ENCODE measurements at regions of chr1 and their contacts with region 1.

Region 1: DNA sequence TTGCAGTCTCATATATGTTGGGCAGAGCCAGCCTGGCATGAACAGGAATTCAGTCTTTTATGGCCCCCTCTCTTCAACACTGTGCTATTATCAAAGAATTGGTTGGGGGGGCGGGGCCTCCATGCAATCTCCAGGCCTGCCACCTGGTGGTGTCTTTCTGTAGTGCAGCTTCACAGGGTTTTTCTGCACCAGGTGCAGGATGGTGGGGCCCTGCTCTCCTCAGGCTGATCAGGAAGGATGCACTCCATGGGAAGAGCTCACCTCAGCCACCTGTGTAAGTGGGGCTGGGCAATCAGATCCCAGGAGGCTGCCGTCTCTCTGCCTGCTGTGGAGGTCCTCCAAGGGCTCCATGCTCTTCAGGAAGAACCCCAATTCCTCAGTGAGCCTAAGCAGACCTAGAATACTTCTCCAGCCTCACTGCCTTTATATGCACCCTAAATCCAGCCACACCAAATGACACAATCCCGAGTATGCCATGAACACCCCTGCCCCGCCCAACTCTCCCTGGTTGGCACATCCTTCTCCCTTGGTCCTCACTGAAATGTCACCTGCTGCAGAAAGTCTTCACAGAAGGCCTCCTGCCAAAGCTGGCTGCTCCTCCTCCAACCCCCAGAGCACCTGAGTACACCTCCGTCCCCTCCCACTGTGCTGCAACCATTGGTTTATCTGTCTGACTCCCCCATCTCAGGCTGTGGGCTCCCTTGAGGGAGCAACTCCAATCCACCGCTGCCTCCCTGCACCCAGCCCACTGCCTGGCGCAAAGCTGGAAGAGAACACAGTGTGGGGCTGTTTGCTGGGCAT is 16.5 kb downstream of the STK40 start:
- DNase-seq: peak; percentile 75 to 91 (median 85)
- ATAC-seq: peak; percentile 62
- H3K4me3 ChIP-seq: no peak overlapping the region
- H3K4me3 Mint-ChIP-seq: no peak overlapping the region
- H3K27ac ChIP-seq: peak overlapping the region in 1 of 2 experiments; percentile 25
- H3K27ac Mint-ChIP-seq: peak overlapping the region; percentile 79
- H3K4me1 ChIP-seq: peaks cover 55% of the 10 kb centered on the region
- H3K4me1 Mint-ChIP-seq: peaks cover 68% of the 10 kb centered on the region
- H3K27me3 ChIP-seq: no peaks in the 10 kb centered on the region
- H3K27me3 Mint-ChIP-seq: no peaks in the 10 kb centered on the region
- CTCF ChIP-seq: peak; percentile 88

Region 2: DNA sequence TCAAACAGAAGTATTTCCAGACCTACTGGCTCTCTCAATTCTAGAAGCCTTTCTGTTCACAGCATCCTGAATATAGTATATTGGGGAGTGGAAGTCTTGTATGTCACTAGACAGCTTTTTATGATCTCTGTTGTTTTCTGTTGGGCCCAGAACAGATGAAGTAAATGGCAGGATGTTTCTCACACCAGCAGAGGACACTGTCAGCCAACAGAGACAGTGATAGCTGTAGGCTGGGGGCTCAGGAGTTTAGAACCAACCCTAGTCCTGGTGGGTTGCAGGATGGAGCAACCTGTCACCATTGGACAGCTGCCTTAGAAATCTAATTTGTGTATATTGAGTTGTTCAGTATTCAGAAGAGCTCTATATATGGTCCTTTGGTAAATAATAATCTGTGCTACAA is 469.3 kb before region 1 on chr1:
- CTCF ChIA-PET with region 1: no interaction called
- POLR2A ChIA-PET with region 1: no interaction called
- intact Hi-C with region 1: no loop called
- DNase-seq: no peak
- ATAC-seq: no peak
- H3K4me3 ChIP-seq: no peak overlapping the region
- H3K4me3 Mint-ChIP-seq: no peak overlapping the region
- H3K27ac ChIP-seq: no peak overlapping the region
- H3K27ac Mint-ChIP-seq: no peak overlapping the region
- H3K4me1 ChIP-seq: no peaks in the 10 kb centered on the region
- H3K4me1 Mint-ChIP-seq: no peaks in the 10 kb centered on the region
- H3K27me3 ChIP-seq: no peaks in the 10 kb centered on the region
- H3K27me3 Mint-ChIP-seq: no peaks in the 10 kb centered on the region
- CTCF ChIP-seq: no peak

Region 3: DNA sequence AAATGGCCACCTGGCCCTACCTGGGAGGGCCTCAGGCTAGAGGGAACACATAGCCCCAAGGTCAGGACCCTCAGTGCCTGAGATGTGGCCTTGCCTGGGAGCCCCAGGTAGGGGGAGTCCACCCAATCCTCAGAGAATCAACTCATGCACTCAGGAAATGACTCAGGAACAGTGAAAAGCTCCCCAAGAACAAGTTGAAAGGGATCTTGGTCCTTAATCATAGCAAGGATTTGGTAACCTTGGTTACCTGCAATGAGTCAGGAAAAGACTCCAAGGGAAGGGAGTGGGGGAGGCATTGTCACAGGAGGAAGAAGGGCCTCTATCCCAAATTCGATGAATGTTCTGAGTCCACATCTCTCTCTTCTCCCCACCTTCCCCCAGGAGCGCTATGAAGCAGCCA is 196.3 kb before region 1 on chr1:
- CTCF ChIA-PET with region 1: no interaction called
- POLR2A ChIA-PET with region 1: interaction called, 10 read pairs
- intact Hi-C with region 1: no loop called
- DNase-seq: no peak
- ATAC-seq: no peak
- H3K4me3 ChIP-seq: no peak overlapping the region
- H3K4me3 Mint-ChIP-seq: no peak overlapping the region
- H3K27ac ChIP-seq: no peak overlapping the region
- H3K27ac Mint-ChIP-seq: peak overlapping the region; percentile 27
- H3K4me1 ChIP-seq: no peaks in the 10 kb centered on the region
- H3K4me1 Mint-ChIP-seq: peaks cover 22% of the 10 kb centered on the region
- H3K27me3 ChIP-seq: no peaks in the 10 kb centered on the region
- H3K27me3 Mint-ChIP-seq: no peaks in the 10 kb centered on the region
- CTCF ChIP-seq: no peak

Region 4: GRCh38 chr1:36350659-36351226 is 18.5 kb before region 1 on chr1:
- CTCF ChIA-PET with region 1: interaction called, 139 read pairs
- POLR2A ChIA-PET with region 1: interaction called, 10 read pairs
- intact Hi-C with region 1: no loop called
- DNase-seq: peak in 8 of 9 experiments; percentile 42 to 75 (median 54)
- ATAC-seq: peak; percentile 94
- H3K4me3 ChIP-seq: no peak overlapping the region
- H3K4me3 Mint-ChIP-seq: peak overlapping the region; percentile 29
- H3K27ac ChIP-seq: no peak overlapping the region
- H3K27ac Mint-ChIP-seq: peak overlapping the region; percentile 79
- H3K4me1 ChIP-seq: peaks cover 18% of the 10 kb centered on the region
- H3K4me1 Mint-ChIP-seq: peaks cover 13% of the 10 kb centered on the region
- H3K27me3 ChIP-seq: no peaks in the 10 kb centered on the region
- H3K27me3 Mint-ChIP-seq: no peaks in the 10 kb centered on the region
- CTCF ChIP-seq: no peak

Region 5: DNA sequence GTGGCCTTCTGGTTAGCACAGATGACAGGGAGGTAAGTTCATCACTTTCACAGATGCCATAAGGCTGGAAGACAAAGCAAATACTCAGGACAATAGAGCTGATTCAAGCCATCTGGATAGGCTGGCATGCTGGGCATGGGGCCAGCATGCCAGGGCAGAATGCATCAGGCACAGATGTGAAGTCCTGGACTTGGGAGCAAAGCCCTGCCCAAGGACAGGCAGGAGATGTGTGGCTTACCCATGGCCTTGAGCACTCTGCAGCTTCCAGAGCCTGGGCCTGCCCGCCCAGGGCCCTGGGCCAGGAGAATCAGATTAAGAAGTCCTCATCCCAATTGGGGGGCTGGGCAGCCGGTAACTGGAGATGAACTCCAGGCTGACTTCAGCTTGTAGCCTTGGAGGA is 969.4 kb after region 1 on chr1:
- CTCF ChIA-PET with region 1: no interaction called
- POLR2A ChIA-PET with region 1: no interaction called
- intact Hi-C with region 1: no loop called
- DNase-seq: no peak
- ATAC-seq: no peak
- H3K4me3 ChIP-seq: no peak overlapping the region
- H3K4me3 Mint-ChIP-seq: no peak overlapping the region
- H3K27ac ChIP-seq: no peak overlapping the region
- H3K27ac Mint-ChIP-seq: no peak overlapping the region
- H3K4me1 ChIP-seq: no peaks in the 10 kb centered on the region
- H3K4me1 Mint-ChIP-seq: no peaks in the 10 kb centered on the region
- H3K27me3 ChIP-seq: no peaks in the 10 kb centered on the region
- H3K27me3 Mint-ChIP-seq: peaks cover 18% of the 10 kb centered on the region
- CTCF ChIP-seq: no peak